A549 (cell line): ENCODE measurements at regions of chr17 and their contacts with region 1.

Region 1: GRCh38 chr17:66373944-66374817 is 71.8 kb downstream of the PRKCA start:
- DNase-seq: no peak
- ATAC-seq: peak; percentile 22 to 36; a peak in 3 of 6 replicates
- H3K4me3 ChIP-seq: no peak overlapping the region
- H3K27ac ChIP-seq: 0 out of 6 replicates have a peak overlapping the region, but pooled peaks of 1 of the 2 experiments have one; percentile 9
- H3K4me1 ChIP-seq: peaks cover 59% of the 10 kb centered on the region
- CTCF ChIP-seq: no peak
- EP300 ChIP-seq: no peak
- POLR2A ChIP-seq: no peak
- RAD21 ChIP-seq: no peak

Region 2: GRCh38 chr17:66322764-66323163 is 51.4 kb before region 1 on chr17:
- CTCF ChIA-PET with region 1: no interaction called
- POLR2A ChIA-PET with region 1: no interaction called
- DNase-seq: no peak
- ATAC-seq: no peak
- H3K4me3 ChIP-seq: no peak overlapping the region
- H3K27ac ChIP-seq: no peak overlapping the region
- H3K4me1 ChIP-seq: peaks cover 14% of the 10 kb centered on the region; the same call in 2 of the 3 replicates
- CTCF ChIP-seq: no peak
- EP300 ChIP-seq: no peak
- POLR2A ChIP-seq: no peak
- RAD21 ChIP-seq: no peak

Region 3: DNA sequence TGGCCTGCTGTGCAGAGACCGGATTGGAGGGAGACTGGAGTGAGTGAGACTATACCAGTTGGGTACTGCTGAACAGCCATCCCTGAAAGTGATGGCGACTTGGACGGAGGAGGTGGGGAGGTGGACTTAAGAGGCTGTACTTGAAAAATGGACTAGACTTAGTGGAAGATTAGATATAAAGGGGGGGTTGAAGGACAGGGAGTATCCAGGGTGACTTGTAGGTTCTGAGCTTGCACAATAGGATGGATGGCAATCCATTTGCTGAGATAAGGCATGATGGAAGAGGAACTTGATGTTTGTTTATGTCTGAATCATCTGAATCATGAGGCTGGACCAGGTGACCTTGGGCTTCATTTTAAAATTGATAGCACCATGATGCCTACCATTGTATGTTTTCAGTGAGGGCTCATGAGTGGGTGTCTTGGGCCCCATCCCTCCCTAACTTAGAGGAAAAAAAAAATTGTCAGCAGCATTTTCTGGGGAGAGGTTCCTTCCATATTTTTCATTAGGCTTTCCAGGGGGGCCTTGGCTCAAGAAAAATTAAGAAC is 30.6 kb before region 1 on chr17:
- CTCF ChIA-PET with region 1: no interaction called
- POLR2A ChIA-PET with region 1: no interaction called
- DNase-seq: peak in 1 of 2 experiments; percentile 90
- ATAC-seq: peak; percentile 82 to 85
- H3K4me3 ChIP-seq: no peak overlapping the region
- H3K27ac ChIP-seq: peak overlapping the region; percentile 81 to 85
- H3K4me1 ChIP-seq: peaks cover 92% of the 10 kb centered on the region
- CTCF ChIP-seq: no peak
- EP300 ChIP-seq: peak; percentile 74 to 82; a peak in 3 of 5 replicates
- POLR2A ChIP-seq: no peak
- RAD21 ChIP-seq: peak in 1 of 2 experiments; percentile 46; a peak in 2 of 5 replicates

Region 4: GRCh38 chr17:67322042-67322787 is 948.0 kb after region 1 on chr17:
- CTCF ChIA-PET with region 1: no interaction called
- POLR2A ChIA-PET with region 1: interaction called, 10 read pairs
- DNase-seq: no peak
- ATAC-seq: no peak
- H3K4me3 ChIP-seq: no peak overlapping the region
- H3K27ac ChIP-seq: no peak overlapping the region
- H3K4me1 ChIP-seq: no peaks in the 10 kb centered on the region
- CTCF ChIP-seq: no peak
- EP300 ChIP-seq: no peak
- POLR2A ChIP-seq: no peak
- RAD21 ChIP-seq: no peak